GM10248 (cell line): ENCODE measurements at regions of chr1 and their contacts with region 1.

Region 1: GRCh38 chr1:201511941-201512539 is 5.1 kb upstream of the CSRP1 start:
- DNase-seq: peak; percentile 65
- CTCF ChIP-seq: no peak

Region 2: GRCh38 chr1:201436393-201436792 is 75.6 kb before region 1 on chr1:
- CTCF ChIA-PET with region 1: interaction called, 46 read pairs
- POLR2A ChIA-PET with region 1: no interaction called
- DNase-seq: no peak
- CTCF ChIP-seq: no peak

Region 3: GRCh38 chr1:201456499-201457309 is 55.3 kb before region 1 on chr1:
- CTCF ChIA-PET with region 1: interaction called, 174 read pairs
- POLR2A ChIA-PET with region 1: no interaction called
- DNase-seq: no peak
- CTCF ChIP-seq: no peak

Region 4: DNA sequence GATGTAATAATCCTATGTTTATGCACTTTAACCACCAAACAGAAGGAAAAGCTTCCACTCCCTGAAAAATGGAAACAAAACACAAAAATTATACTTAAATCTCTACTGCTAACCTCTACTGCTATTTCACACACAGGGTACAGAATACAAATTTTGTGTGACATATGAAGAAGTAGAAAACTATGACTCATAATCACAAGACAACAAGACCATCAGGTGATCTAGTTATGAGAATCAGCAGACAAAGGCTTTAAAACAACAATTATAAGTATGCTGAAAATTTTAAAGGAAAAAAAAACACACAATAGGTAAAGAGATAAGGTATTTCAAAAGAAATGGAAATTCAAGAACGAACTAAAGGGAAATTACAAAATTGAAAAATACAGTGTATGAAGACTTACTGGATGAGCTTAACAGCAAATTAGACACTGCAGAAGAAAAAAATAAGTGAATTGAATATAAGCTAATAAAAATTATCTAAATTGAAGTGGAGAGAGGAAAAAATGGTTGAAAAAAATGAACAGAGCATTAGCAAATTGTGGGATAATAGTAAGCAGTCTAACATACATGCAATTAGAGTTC is 13.2 kb after region 1 on chr1:
- CTCF ChIA-PET with region 1: interaction called, 157 read pairs
- POLR2A ChIA-PET with region 1: no interaction called
- DNase-seq: no peak
- CTCF ChIP-seq: no peak

Region 5: DNA sequence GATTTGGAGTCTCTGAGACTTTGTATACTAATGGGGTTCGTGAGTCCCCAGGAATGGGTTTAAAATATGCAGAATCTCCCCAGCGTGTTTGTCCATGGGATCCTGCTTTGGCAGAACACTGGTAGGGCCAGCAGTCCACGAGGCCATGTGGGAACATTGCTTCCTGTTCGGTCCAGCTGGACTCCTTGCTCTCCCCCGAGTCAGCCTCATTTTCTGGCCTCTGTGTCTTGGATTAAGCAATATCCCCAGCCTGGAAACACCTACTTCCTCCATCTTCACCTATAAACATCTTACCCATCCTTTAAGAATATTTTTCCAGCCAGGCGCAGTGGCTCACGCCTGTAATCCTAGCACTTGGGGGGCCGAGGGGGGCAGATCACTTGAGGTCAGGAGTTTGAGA is 169.3 kb after region 1 on chr1:
- CTCF ChIA-PET with region 1: no interaction called
- POLR2A ChIA-PET with region 1: no interaction called
- DNase-seq: no peak
- CTCF ChIP-seq: no peak

Region 6: GRCh38 chr1:201703621-201704439 is 191.8 kb after region 1 on chr1:
- CTCF ChIA-PET with region 1: interaction called, 10 read pairs
- POLR2A ChIA-PET with region 1: no interaction called
- DNase-seq: peak; percentile 86
- CTCF ChIP-seq: peak; percentile 92